Mammary epithelial cell (primary cell): ENCODE measurements at regions of chr9 and their contacts with region 1.

Region 1: DNA sequence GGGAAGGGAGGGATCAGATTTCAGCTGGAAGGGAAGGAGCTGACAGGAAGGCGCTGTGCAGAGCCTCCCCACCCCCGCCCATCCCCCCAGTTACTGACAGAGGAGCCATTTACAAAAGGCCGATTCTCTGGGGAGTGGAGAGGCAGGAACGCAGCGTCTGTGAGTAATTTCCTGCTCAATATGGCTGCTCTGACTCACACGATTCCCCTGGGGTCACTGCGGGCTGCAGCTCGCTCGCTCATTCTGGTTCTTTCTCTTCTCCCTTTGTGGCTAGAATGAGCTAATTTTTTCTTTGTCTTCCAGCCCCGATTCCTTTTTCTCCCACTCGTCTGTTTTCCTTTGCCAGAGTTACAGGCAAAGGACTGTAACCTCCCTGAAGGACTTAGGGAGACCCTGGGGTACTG is 28.8 kb downstream of the PTPA start:
- DNase-seq: peak; percentile 99
- H3K4me3 ChIP-seq: peak overlapping the region; percentile 17 to 39 (median 32)
- H3K27ac ChIP-seq: peak overlapping the region; percentile 98
- H3K4me1 ChIP-seq: peaks cover 52% of the 10 kb centered on the region
- H3K27me3 ChIP-seq: no peaks in the 10 kb centered on the region
- CTCF ChIP-seq: no peak

Region 2: DNA sequence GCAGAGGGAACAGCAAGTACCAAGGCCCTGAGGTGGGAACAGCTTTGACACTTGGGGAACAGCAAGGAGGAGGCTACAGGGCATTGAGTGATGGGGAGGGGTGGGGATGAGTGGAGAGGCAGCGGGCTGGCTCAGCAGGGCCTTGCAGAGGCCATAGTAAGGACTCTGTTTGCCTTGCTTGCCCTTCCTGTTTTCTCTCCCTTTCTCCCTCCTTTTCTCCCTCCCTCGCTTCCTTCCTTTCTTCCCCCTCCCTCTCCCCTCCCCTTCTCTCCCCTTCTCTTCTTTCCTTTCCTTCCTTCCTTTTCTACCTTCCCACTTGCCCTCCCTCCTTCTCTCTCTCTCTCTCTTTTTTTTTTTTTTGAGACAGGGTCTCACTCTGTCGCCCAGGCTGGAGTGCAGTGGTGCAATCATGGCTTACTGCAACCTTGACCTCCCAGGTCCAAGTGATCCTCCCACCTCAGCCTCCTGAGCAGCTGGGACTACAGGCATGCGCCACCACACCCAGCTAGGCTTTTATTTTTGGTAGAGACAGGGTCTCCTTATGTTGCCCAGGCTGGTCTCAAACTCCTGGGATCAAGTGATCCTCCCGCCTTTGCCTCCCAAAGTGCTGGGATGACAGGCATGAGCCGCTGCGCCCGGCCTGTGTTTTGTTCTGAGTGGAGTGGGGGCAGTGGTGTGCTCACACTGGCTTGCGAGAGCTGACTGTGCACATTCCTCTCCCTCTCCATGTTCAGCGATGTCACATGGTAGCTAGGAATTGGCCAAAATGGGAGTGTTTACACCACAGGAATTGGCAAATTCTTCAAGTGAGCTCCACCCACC is 20.9 kb after region 1 on chr9:
- CTCF ChIA-PET with region 1: interaction called, 11 read pairs
- dilution Hi-C with region 1: no loop called
- in situ Hi-C with region 1: no loop called
- intact Hi-C with region 1: no loop called
- DNase-seq: no peak
- H3K4me3 ChIP-seq: no peak overlapping the region
- H3K27ac ChIP-seq: no peak overlapping the region
- H3K4me1 ChIP-seq: peaks cover 11% of the 10 kb centered on the region
- H3K27me3 ChIP-seq: no peaks in the 10 kb centered on the region
- CTCF ChIP-seq: no peak

Region 3: DNA sequence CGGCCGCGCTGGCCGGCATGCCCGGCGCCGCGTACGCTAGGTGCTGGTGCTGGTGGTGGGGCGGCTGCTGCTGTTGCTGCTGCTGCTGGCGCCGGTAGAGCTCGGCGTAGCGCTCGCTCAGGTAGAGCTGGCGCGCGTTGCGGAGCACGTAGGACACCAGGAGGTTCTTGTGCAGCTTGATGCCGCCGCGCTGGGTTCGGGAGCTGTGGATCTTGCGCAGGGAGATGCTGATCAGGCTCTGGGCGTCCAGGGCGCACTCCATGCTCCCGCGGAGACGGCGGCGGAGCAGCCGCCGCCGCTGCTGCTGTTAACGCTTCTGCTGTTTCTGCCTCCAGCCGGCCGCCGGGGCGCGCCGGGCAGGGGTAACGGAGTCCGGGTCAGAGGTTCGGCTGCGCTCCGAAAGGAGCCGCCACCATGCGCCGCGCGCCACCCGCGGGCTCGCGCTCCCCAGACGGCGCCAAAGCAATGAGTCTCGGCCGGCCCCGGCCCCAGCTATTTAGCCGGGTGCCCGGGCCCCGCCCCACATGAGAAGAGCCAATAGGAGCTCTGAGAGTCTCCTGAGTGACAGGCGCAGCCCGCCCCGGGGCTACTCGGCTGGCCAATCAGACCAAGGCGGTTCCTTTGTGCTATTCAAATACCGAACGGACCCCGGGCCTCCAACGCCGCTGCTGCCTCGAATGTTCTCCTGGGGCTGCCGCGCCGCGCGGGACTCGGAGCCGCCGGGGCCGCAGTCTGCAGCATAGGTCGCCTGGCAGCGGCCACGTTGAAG is 38.0 kb after region 1 on chr9 and contains the start of gene IER5L:
- CTCF ChIA-PET with region 1: interaction called, 24 read pairs
- dilution Hi-C with region 1: no loop called
- in situ Hi-C with region 1: no loop called
- intact Hi-C with region 1: loop called (anchors 1 kb)
- DNase-seq: peak; percentile 90
- H3K4me3 ChIP-seq: peak within 1 kb of the TSS; percentile 89 to 97 (median 97)
- H3K27ac ChIP-seq: no peak within 1 kb of the TSS
- H3K4me1 ChIP-seq: peaks cover 32% of the 10 kb centered on the region
- H3K27me3 ChIP-seq: no peaks in the 10 kb centered on the region
- CTCF ChIP-seq: peak in 1 of 2 donors; percentile 8
- total RNA-seq, gene IER5L: 13.5 to 34.2 TPM

Region 4: DNA sequence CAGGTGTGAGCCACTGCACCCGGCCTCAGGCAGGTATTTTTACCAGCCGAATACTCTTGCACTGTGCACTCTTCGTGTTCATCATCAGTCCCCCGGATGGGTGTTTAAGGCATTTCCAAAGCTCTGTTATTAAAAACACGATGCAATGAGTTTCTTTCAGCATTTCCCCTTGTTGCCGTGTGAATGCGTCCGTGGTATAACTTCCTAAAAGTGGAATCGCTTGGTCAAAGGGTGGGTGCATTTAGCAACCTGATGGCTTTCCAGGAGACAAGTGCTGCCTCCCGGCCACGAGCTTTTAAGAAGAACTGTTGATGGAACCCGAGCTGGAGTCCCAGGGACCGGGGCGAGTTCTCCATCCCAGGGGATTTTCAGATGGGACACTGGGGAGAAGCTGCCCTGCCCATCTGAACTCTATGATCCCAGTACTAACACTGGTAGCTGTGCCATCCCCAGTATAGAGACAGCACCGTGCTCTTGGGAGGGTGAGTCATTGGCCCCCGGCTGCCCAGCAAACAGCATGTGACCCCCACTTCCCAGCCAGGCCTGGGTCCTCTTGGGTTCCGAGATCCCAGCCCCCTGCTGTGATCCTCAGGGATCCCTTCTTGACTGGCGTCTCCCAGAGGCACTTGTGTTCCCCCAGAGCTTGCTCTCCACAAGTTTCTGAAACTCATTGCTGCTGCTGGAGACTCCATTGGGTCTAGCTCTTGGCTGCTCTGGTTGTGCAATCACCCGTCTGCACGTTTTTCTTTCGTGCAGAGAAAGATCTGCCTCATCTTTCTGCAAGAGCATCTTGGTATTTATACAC is 207.5 kb after region 1 on chr9:
- CTCF ChIA-PET with region 1: interaction called, 9 read pairs
- dilution Hi-C with region 1: no loop called
- in situ Hi-C with region 1: no loop called
- intact Hi-C with region 1: loop called (anchors 5 kb)
- DNase-seq: no peak
- H3K4me3 ChIP-seq: no peak overlapping the region
- H3K27ac ChIP-seq: no peak overlapping the region
- H3K4me1 ChIP-seq: no peaks in the 10 kb centered on the region
- H3K27me3 ChIP-seq: no peaks in the 10 kb centered on the region
- CTCF ChIP-seq: no peak

Region 5: GRCh38 chr9:129487642-129488409 is 347.8 kb after region 1 on chr9:
- CTCF ChIA-PET with region 1: no interaction called
- dilution Hi-C with region 1: no loop called
- in situ Hi-C with region 1: loop called in 1 of 2 experiments (anchors 25 kb)
- intact Hi-C with region 1: loop called (anchors 2 kb)
- DNase-seq: peak; percentile 50
- H3K4me3 ChIP-seq: peak overlapping the region in 1 of 3 experiments; percentile 29
- H3K27ac ChIP-seq: peak overlapping the region; percentile 38
- H3K4me1 ChIP-seq: peaks cover 48% of the 10 kb centered on the region
- H3K27me3 ChIP-seq: no peaks in the 10 kb centered on the region
- CTCF ChIP-seq: no peak

Region 6: DNA sequence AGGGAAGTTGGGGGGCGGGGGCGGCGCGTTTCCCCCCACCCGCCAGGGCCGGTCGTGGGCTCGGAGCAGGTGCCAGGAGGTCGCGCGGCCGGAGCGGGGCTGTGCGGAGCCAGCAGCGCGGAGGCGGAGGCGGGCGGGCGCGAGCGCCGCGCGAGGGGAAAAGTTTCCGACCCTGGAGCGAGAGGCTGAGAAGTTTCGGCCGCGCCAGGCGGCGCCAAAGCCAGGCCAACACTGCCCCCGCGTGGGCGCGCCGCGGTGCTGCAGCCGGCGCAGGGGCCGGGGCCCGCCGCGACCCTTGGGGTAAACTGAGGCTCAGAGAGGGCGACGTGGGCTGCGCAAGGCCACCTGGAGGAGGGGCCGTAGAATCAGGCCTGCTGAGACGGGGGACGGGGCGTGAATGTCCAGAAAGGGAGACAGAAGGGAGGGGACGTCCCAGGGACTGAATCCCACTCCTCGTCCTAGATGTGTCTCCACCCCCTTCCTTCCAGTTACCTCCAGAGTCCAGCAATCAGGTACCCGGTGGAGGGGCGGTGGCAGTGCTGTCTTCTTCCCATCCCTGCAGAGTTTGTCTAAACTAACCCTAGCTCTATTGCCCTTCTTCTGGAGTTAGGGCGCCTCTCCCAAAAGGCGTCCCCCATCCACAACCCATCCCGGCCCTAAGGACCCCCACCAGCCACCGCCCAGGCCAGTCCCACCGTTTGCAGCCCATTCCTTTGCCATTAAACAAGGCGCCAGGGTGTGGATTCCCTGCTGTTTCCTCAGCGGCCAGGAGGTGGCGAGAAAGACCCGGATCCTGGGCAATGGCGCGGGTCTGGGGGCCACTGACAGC is 470.7 kb after region 1 on chr9:
- CTCF ChIA-PET with region 1: interaction called, 5 read pairs
- dilution Hi-C with region 1: no loop called
- in situ Hi-C with region 1: no loop called
- intact Hi-C with region 1: loop called (anchors 1 kb)
- DNase-seq: peak; percentile 37
- H3K4me3 ChIP-seq: peak overlapping the region; percentile 52 to 62 (median 55)
- H3K27ac ChIP-seq: no peak overlapping the region
- H3K4me1 ChIP-seq: peaks cover 22% of the 10 kb centered on the region
- H3K27me3 ChIP-seq: no peaks in the 10 kb centered on the region
- CTCF ChIP-seq: peak; percentile 80 to 81

Region 7: DNA sequence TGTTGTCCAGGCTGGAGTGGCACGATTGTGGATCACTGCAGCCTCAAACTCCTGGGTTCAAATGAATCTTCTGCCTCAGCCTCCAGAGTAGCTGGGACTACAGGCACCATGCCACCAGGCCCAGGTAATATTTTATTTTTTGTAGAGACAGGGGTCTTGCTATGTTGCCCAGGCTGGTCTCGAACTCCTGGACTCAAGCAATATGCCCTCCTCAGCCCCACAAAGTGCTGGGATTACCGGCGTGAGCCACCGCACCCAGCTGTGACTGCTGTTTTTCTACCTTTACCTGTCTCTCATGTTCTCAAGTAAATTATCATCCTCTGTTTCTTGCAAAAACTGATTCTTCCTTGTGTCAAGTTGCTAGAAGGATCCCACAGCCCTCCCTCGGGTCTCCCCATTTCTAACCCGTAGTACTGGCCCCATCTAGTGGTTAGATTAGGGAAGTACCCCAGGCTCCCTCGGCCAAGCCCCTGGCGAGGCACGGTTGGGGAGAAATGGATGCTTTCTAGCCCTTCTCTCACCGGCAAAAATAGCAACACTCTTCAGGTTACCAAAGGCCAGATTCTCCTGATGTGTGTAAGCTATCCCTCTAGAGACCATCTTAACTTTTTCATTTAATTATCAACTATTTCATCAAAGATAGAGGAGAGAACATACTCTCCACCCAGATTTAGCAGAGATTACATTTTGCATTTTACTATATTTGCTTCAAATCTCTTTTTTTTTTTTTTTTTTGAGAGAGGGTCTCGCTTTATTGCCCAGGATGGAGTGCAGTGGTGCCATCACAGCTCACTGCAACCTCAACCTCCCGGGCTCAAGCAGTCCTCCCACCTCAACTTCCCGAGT is 643.7 kb after region 1 on chr9:
- CTCF ChIA-PET with region 1: no interaction called
- dilution Hi-C with region 1: no loop called
- in situ Hi-C with region 1: loop called (anchors 25 kb)
- intact Hi-C with region 1: no loop called
- DNase-seq: peak; percentile 54
- H3K4me3 ChIP-seq: no peak overlapping the region
- H3K27ac ChIP-seq: no peak overlapping the region
- H3K4me1 ChIP-seq: no peaks in the 10 kb centered on the region
- H3K27me3 ChIP-seq: no peaks in the 10 kb centered on the region
- CTCF ChIP-seq: peak; percentile 88 to 95